ENCODE measurements at regions of chr1 and their contacts with region 1.

Region 1: DNA sequence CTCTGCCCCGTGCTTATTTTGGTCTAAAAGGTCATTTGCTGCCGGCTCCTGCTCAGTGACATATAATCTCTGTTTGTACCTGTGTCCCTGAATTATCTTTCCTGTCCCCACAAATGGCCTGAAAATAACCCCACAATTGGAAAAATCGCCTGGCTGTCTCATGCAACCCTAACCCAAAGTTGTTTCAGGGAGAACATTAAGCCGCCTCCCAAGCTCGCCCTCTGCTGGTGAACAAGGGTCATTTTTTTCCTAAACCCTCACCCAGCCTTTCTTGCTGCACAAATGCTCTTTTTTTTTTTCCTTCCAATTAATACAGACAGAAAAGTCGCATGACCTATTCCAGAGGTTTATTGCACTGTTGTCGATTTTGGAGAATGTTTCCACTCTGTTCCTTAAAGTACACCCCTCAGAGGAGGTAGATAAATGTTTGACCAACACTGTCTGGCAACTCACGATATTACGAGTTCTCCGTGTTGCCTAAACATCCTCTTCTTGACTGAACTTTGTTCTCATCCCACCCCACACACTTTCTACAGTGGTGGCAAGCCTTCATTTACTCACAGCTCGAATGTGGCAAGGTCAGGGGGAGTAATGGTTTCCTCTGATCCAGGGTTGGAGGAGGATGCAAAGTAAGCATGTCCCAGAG is 148.7 kb downstream of the ZZZ3 start:
- DNase-seq: peak; percentile 81
- H3K4me3 ChIP-seq: no peak overlapping the region; a peak in 1 of 4 replicates
- H3K27ac ChIP-seq: peak overlapping the region in 1 of 2 experiments; percentile 17; a peak in 1 of 4 replicates
- H3K4me1 ChIP-seq: peaks cover 0 to 50% of the 10 kb centered on the region in 2 experiments; a peak in 3 of 4 replicates
- H3K27me3 ChIP-seq: no peaks in the 10 kb centered on the region
- CTCF ChIP-seq: peak; percentile 85
- EP300 ChIP-seq: no peak
- RAD21 ChIP-seq: peak; percentile 88

Region 2: DNA sequence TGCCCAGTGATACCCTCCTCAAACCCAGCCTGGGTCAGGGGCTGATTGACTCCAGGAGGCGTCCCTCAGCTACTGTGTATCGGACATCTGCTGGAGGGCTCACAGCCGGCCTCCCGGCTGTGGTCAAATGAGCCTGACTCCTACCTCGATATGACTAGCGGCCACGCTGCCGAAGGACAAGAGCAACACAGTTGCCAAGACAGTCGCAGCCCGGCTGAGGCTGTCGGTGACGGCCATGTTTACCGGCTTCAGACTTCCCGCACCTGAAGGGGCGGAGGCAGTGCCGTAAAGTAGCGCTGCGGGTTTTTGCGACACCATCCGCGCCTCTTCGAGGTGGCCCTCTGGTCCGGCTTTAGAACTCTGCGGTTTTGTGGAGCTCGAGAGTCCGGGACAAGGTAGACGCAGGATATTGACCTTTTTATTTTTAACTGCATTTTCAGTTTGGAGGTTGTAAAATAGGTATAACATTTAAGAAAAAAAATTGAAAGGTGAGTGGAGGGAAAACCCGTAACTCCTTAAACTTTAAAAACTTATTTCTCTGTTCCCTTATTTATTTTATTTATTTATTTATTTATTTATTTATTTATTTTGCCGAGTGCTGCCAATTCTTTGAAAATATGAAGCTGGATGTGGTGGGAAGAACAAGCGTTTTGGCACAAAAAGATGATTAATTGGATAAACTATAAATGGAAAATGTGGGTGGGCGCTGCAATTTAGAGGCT is 314.5 kb before region 1 on chr1 and contains the start of gene PIGK:
- CTCF ChIA-PET with region 1: interaction called, 10 read pairs
- POLR2A ChIA-PET with region 1: no interaction called
- DNase-seq: peak; percentile 74
- H3K4me3 ChIP-seq: peak within 1 kb of the TSS; percentile 88 to 98
- H3K27ac ChIP-seq: peak within 1 kb of the TSS; percentile 71 to 85
- H3K4me1 ChIP-seq: peaks cover 0 to 9% of the 10 kb centered on the region in 2 experiments; a peak in 1 of 4 replicates
- H3K27me3 ChIP-seq: no peaks in the 10 kb centered on the region
- CTCF ChIP-seq: peak; percentile 27
- EP300 ChIP-seq: no peak; a peak in 1 of 4 replicates
- RAD21 ChIP-seq: peak; percentile 9; the same call in 1 of the 2 replicates
- polyA plus RNA-seq, gene PIGK: 11.5 and 17.6 TPM in 2 replicates

Region 3: GRCh38 chr1:77281491-77282186 is 252.1 kb before region 1 on chr1 and contains the start of gene AK5:
- CTCF ChIA-PET with region 1: interaction called, 11 read pairs
- POLR2A ChIA-PET with region 1: no interaction called
- DNase-seq: peak; percentile 90
- H3K4me3 ChIP-seq: peak within 1 kb of the TSS; percentile 63 to 82
- H3K27ac ChIP-seq: no peak within 1 kb of the TSS; a peak in 1 of 4 replicates
- H3K4me1 ChIP-seq: peaks cover 0 to 13% of the 10 kb centered on the region in 2 experiments; a peak in 2 of 4 replicates
- H3K27me3 ChIP-seq: no peaks in the 10 kb centered on the region
- CTCF ChIP-seq: peak; percentile 10; the same call in 1 of the 2 replicates
- EP300 ChIP-seq: no peak
- RAD21 ChIP-seq: no peak
- polyA plus RNA-seq, gene AK5: 22.9 TPM in 2 replicates

Region 4: DNA sequence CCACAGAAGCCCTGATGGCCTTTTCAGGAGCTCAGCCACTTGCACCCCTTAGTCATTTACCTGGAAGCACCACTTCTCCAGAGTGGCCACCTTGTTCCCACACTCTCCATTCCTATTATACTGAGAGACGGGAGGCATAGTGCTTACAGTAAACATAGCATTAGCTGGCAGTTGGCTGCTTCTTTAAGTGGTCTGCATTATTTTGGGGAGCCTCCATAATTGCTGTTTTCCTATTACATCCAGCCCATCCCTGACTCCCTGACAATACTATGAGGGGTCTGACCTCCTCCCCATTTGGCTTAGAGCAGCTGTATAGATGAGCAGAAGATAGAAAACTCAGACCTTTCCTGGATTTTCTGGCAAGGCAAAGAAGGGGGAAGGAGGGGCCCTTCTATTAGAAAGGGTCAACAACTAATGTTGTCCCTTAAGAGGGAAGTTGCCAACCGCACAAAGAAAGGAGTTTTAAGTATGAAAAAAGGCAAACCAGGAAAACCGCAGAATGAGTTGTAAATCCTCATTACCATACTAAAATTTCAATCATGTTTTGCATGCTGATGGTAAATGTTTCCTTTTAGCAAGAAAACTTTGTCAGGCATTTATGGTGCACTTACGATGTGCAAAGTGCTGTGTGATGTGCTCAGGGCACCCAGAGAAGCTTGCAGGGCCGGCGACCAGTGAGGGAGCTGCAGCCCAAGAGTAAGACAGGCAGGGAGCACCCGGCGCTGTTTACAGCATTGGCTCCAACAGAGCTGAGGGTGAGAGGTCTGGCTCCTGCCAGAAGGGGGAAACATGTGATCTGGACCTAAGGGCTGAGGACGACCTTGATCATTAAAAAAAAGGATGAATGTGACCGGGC is 18.6 kb before region 1 on chr1:
- CTCF ChIA-PET with region 1: interaction called, 11 read pairs
- POLR2A ChIA-PET with region 1: no interaction called
- DNase-seq: no peak
- H3K4me3 ChIP-seq: no peak overlapping the region
- H3K27ac ChIP-seq: peak overlapping the region; percentile 85 to 95
- H3K4me1 ChIP-seq: peaks cover 14 to 28% of the 10 kb centered on the region in 2 experiments
- H3K27me3 ChIP-seq: no peaks in the 10 kb centered on the region
- CTCF ChIP-seq: peak; percentile 45
- EP300 ChIP-seq: no peak
- RAD21 ChIP-seq: peak; percentile 26; the same call in 1 of the 2 replicates

Region 5: DNA sequence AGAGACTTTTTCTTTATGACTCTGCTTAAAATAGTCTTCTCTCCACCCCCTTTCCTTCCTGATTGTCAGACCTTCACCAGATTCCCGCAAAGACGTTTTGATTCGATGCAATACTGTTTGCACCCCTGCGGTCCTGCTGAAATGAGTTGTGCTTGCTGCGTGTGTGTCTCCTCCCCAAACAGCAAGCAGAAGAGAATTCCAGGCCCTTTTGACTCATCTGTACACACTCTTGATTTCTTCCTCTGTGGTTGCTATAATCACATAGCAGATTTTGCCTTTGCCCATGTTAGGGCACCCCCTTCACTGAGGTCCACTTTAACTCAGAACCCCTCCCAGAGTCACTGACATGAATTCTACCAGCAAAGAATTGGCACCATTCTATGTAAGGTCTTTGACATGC is 12.2 kb after region 1 on chr1:
- CTCF ChIA-PET with region 1: interaction called, 11 read pairs
- POLR2A ChIA-PET with region 1: no interaction called
- DNase-seq: no peak
- H3K4me3 ChIP-seq: no peak overlapping the region
- H3K27ac ChIP-seq: no peak overlapping the region
- H3K4me1 ChIP-seq: peaks cover 0 to 15% of the 10 kb centered on the region in 2 experiments; a peak in 3 of 4 replicates
- H3K27me3 ChIP-seq: no peaks in the 10 kb centered on the region
- CTCF ChIP-seq: no peak
- EP300 ChIP-seq: no peak
- RAD21 ChIP-seq: no peak

Region 6: GRCh38 chr1:77557053-77557452 is 23.3 kb after region 1 on chr1:
- CTCF ChIA-PET with region 1: interaction called, 14 read pairs
- POLR2A ChIA-PET with region 1: no interaction called
- DNase-seq: no peak
- H3K4me3 ChIP-seq: no peak overlapping the region
- H3K27ac ChIP-seq: no peak overlapping the region
- H3K4me1 ChIP-seq: no peaks in the 10 kb centered on the region
- H3K27me3 ChIP-seq: no peaks in the 10 kb centered on the region
- CTCF ChIP-seq: no peak
- EP300 ChIP-seq: no peak
- RAD21 ChIP-seq: no peak